MCF 10A (cell line): ENCODE measurements at regions of chr19 and their contacts with region 1.

Region 1: GRCh38 chr19:11374433-11375142 is at the start of gene SWSAP1:
- DNase-seq: peak; percentile 100
- H3K4me3 Mint-ChIP-seq: no peak within 1 kb of the TSS
- H3K27ac Mint-ChIP-seq: no peak within 1 kb of the TSS
- H3K4me1 Mint-ChIP-seq: peaks cover 18% of the 10 kb centered on the region
- H3K27me3 Mint-ChIP-seq: no peaks in the 10 kb centered on the region
- CTCF ChIP-seq: no peak
- total RNA-seq, gene SWSAP1: 1.0 and 1.4 TPM in 2 replicates

Region 2: DNA sequence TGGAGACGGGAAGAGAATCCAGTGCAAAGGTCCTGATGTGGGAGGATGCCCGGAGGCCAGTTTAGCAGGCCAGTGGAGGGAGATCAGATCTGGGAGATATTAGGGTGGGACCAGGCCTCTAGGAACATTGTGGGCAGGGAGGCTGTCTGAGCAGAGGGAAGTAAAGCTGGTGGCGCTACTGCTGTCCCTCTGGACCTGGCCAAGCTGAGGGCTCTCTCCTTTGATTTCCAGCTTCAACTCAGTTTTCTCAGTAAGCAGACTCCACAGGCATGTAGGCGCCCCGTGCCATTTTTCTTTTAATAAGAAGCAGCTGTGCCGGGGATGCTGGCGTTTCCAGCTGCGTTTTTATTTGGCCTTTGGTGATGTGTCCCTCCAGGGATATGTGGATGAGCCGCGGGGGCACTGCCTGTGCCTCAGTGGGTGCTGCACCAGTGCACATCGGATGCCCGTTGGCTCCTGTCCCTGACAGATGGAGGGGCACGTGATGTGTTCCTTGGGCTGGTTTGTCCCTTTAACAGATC is 650.0 kb before region 1 on chr19:
- CTCF ChIA-PET with region 1: no interaction called
- POLR2A ChIA-PET with region 1: no interaction called
- intact Hi-C with region 1: no loop called
- DNase-seq: no peak
- H3K4me3 Mint-ChIP-seq: no peak overlapping the region
- H3K27ac Mint-ChIP-seq: no peak overlapping the region
- H3K4me1 Mint-ChIP-seq: peaks cover 5% of the 10 kb centered on the region
- H3K27me3 Mint-ChIP-seq: no peaks in the 10 kb centered on the region
- CTCF ChIP-seq: no peak

Region 3: GRCh38 chr19:11324079-11324661 is 50.4 kb before region 1 on chr19:
- CTCF ChIA-PET with region 1: interaction called, 3 read pairs
- POLR2A ChIA-PET with region 1: interaction called, 11 read pairs
- intact Hi-C with region 1: no loop called
- DNase-seq: peak; percentile 99
- H3K4me3 Mint-ChIP-seq: peak overlapping the region; percentile 53
- H3K27ac Mint-ChIP-seq: peak overlapping the region; percentile 49
- H3K4me1 Mint-ChIP-seq: peaks cover 16% of the 10 kb centered on the region
- H3K27me3 Mint-ChIP-seq: no peaks in the 10 kb centered on the region
- CTCF ChIP-seq: no peak

Region 4: DNA sequence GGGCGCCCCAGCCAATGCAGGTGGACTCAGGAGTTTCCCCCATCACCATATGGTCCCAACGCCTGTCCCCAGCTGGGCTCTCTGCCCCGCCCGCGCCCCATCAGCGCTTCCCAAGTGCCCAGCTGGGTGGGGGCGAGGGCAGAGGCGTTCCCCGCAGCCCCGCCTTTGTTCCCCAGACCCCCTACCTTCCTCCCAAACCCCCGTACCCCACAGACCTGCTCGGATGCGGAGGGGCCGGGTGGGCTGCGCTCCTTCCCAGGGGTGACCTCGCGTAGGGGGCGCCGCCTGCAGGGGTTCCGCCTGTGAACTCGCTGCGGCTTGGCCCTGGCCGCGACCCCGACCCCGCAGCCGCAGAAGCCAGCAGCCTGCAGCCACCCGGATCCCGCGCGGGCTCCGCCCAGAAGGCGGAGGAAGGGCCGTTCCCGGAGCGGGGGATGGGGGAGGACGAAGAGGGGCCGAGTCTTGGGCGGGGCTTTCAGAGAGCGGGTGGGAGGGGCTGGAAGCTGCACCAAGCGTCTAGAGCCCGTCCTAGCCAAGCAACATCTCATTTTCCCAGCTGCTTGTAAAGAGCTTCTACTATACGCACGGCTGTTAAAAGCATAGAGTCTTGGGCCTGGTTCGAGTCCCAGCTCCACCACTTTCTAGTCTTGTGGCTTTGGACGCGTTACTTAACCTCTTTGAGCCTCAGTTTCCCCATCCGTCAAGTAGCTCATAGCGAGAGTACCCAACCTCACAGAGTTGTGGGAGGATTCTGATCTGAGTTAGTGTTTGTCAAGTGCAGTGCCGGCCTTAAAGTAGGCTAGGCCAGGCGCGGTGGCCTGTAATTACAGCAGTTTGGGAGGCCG is 35.1 kb before region 1 on chr19 and contains the start of gene RAB3D:
- CTCF ChIA-PET with region 1: interaction called, 6 read pairs
- POLR2A ChIA-PET with region 1: interaction called, 88 read pairs
- intact Hi-C with region 1: no loop called
- DNase-seq: peak; percentile 93
- H3K4me3 Mint-ChIP-seq: peak within 1 kb of the TSS; percentile 74
- H3K27ac Mint-ChIP-seq: peak within 1 kb of the TSS; percentile 59
- H3K4me1 Mint-ChIP-seq: peaks cover 16% of the 10 kb centered on the region
- H3K27me3 Mint-ChIP-seq: no peaks in the 10 kb centered on the region
- CTCF ChIP-seq: no peak
- total RNA-seq, gene RAB3D: 42.8 and 46.5 TPM in 2 replicates

Region 5: GRCh38 chr19:11346092-11346940 is 28.3 kb before region 1 on chr19 and contains the starts of genes CCDC159 and TMEM205:
- CTCF ChIA-PET with region 1: no interaction called
- POLR2A ChIA-PET with region 1: interaction called, 88 read pairs
- intact Hi-C with region 1: loop called (anchors 2 kb)
- DNase-seq: peak; percentile 100
- H3K4me3 Mint-ChIP-seq: peak within 1 kb of the TSS; percentile 96
- H3K27ac Mint-ChIP-seq: peak within 1 kb of the TSS; percentile 98
- H3K4me1 Mint-ChIP-seq: peaks cover 30% of the 10 kb centered on the region
- H3K27me3 Mint-ChIP-seq: no peaks in the 10 kb centered on the region
- CTCF ChIP-seq: no peak
- total RNA-seq, gene CCDC159: 17.2 and 18.2 TPM in 2 replicates
- total RNA-seq, gene TMEM205: 93.1 and 96.6 TPM in 2 replicates

Region 6: DNA sequence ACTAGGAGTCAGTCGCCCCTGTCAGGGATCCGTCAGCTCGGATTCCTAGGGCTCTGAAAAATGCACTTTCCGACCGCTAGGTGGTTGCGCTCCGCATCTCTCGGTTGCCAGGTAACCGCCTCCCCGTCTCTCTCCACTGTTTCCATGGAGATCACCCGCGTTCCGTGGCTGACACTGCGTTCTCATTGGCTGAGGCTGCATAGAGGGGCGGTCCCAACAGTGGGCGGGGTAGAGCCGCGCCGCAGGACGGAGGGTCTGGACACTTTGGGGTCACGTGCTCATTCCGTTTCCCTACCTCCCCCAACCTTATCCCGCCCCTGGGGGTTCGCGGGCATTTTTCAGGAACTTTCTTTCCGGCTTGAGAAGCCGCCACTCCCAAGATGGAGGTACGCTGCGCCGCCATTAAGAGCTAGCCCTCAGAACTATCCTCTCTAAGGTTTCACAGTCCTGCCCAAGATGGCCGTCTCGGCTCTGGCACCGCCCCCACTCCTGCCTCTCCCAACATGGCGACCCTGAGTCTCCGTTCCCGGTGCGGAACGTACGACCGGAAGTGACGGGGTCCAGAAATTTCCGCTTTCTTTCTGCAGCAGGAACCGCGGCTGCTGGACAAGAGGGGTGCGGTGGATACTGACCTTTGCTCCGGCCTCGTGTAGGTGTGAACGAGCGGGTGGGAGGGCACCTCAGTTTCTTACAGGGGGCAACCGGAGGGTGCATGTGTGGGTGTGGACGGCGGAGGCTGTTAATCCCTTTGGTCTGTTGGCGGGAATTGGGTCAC is 60.7 kb after region 1 on chr19 and contains the starts of genes ODAD3 and PRKCSH:
- CTCF ChIA-PET with region 1: interaction called, 3 read pairs
- POLR2A ChIA-PET with region 1: interaction called, 12 read pairs
- intact Hi-C with region 1: no loop called
- DNase-seq: peak; percentile 100
- H3K4me3 Mint-ChIP-seq: peak within 1 kb of the TSS; percentile 100
- H3K27ac Mint-ChIP-seq: peak within 1 kb of the TSS; percentile 96
- H3K4me1 Mint-ChIP-seq: no peaks in the 10 kb centered on the region
- H3K27me3 Mint-ChIP-seq: no peaks in the 10 kb centered on the region
- CTCF ChIP-seq: peak; percentile 87
- total RNA-seq, gene ODAD3: 0.30 TPM in 1 of 2 replicates, not detected in the other
- total RNA-seq, gene PRKCSH: 224 and 257 TPM in 2 replicates